Activated naive CD4-positive, alpha-beta T cell treated with anti-CD3 and anti-CD28 coated beads for 36 hours (primary cell): ENCODE measurements at regions of chr10 and their contacts with region 1.

Region 1: DNA sequence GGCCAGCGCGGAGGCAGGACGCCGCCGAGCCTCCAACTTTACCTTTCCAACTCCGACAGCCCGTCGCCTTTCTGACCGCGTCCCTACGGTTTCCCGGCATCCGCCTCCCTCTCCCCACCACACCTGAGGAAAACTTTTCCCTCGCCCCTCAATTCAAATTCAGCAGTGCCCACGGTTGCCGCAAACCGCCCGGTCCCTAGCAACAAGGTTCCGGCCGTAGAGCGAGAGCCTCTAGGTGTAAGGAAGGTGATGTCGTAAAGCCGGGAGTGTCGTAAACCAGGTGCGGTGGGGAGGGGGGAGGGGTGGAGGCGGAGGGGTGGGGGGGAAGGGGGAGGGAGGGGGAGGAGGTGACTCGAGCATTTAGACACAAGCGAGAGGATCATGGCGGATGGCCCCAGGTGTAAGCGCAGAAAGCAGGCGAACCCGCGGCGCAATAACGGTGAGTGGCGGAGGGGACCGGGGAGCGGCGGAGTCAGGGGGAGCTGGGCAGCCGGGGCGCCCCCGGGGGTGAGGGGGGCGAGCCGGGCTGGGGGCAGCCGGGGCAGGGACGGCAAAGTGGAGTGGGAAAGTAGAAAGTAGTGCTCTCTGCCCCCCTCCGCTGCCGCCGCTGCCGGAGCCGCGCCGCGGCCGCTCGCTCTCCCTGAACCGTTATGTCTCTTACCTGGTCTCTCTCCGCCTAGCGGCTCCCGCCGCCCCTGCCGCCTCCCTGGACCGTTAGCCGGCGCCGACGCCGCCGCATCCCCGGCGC is at the start of gene ZEB1:
- DNase-seq: peak; percentile 96
- H3K4me3 Mint-ChIP-seq: peak within 1 kb of the TSS; percentile 98
- H3K27ac Mint-ChIP-seq: peak within 1 kb of the TSS; percentile 99
- H3K4me1 Mint-ChIP-seq: peaks cover 33% of the 10 kb centered on the region
- H3K27me3 Mint-ChIP-seq: no peaks in the 10 kb centered on the region
- total RNA-seq, gene ZEB1: 24.8 to 29.1 TPM

Region 2: DNA sequence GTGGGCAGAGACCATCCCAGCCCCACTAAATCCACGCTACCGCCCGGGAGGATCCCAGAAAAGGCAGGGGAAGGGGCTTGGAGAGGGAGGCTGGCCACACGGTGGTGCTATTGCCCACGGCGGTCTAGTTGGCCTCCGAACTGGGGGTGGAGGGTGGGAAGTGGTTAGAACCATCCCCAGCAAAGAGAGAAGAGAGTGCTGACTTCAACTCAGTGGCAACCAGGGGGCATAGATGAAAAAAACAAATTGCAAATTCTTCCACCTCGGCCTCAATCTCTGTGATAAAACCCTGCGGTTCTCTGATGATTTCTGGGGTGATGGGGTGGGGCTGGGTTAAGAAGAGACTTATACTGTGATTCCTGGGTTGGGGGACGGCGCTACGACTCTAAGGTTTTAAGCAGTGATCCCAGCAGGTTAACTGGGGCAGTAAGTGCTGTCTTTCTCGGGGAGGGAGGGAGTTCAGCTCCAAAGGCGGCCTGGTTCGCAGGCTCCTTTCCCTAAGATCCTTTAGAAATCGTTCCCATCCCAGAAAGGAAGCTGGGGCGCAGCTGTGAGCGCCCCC is 535.0 kb before region 1 on chr10:
- CTCF ChIA-PET with region 1: no interaction called
- intact Hi-C with region 1: loop called (anchors 1 kb)
- DNase-seq: peak; percentile 89
- H3K4me3 Mint-ChIP-seq: peak overlapping the region; percentile 69
- H3K27ac Mint-ChIP-seq: peak overlapping the region; percentile 0
- H3K4me1 Mint-ChIP-seq: peaks cover 17% of the 10 kb centered on the region
- H3K27me3 Mint-ChIP-seq: no peaks in the 10 kb centered on the region

Region 3: GRCh38 chr10:31083765-31084184 is 235.3 kb before region 1 on chr10:
- CTCF ChIA-PET with region 1: interaction called, 3 read pairs
- intact Hi-C with region 1: loop called (anchors 1 kb)
- DNase-seq: peak; percentile 86
- H3K4me3 Mint-ChIP-seq: no peak overlapping the region
- H3K27ac Mint-ChIP-seq: peak overlapping the region; percentile 54
- H3K4me1 Mint-ChIP-seq: peaks cover 6% of the 10 kb centered on the region
- H3K27me3 Mint-ChIP-seq: no peaks in the 10 kb centered on the region

Region 4: GRCh38 chr10:31340343-31340742 is 21.3 kb after region 1 on chr10:
- CTCF ChIA-PET with region 1: interaction called, 3 read pairs
- intact Hi-C with region 1: loop called (anchors 1 kb)
- DNase-seq: peak; percentile 49
- H3K4me3 Mint-ChIP-seq: no peak overlapping the region
- H3K27ac Mint-ChIP-seq: no peak overlapping the region
- H3K4me1 Mint-ChIP-seq: peaks cover 31% of the 10 kb centered on the region
- H3K27me3 Mint-ChIP-seq: no peaks in the 10 kb centered on the region

Region 5: GRCh38 chr10:31426401-31426800 is 107.4 kb after region 1 on chr10:
- CTCF ChIA-PET with region 1: no interaction called
- intact Hi-C with region 1: loop called (anchors 2 kb)
- DNase-seq: no peak
- H3K4me3 Mint-ChIP-seq: no peak overlapping the region
- H3K27ac Mint-ChIP-seq: no peak overlapping the region
- H3K4me1 Mint-ChIP-seq: peaks cover 54% of the 10 kb centered on the region
- H3K27me3 Mint-ChIP-seq: no peaks in the 10 kb centered on the region

Region 6: DNA sequence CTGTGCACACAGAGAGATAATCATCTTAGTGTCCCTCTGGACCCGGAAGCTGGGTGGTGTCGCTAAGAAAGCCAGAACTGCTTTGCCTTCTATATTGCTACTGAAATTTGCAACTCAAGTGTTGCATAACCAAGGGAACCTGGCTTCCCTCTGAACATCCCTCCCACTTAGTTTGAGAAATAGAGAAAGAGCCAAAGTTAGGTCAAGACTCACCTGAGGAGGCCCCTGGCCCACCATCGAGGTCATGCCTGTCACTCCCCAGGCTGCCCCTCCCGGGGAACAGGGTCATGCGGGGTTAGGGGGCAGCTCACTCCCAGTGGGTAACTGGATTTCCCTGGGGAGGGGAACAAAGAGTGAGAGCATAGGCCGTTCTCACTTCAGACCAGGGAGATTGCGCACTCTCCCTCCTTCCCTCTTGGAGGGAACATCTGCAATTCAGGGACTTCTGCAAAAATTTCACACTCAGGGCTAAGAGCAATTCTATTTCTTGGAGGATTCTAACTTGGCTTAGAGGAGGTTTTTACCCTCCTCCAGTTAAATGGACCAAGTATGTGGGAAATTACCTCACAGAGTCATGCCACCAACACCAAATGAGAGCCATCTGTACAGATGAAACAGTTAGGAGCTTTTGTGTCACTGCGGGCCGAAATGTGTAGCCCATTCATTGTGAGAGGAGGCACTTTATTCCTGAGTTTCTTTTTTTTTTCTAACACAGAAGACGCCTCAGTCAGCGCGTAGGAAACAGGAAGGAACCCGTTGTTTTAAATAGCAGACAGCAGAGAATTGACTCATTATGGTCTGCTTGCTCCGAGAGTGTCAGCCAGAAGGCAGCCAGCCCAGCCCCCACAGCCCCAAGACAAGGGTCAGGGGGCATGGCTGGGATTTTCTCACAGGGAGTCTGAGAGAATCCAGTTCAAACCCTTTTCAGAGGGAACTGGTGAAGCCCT is 388.3 kb after region 1 on chr10:
- CTCF ChIA-PET with region 1: no interaction called
- intact Hi-C with region 1: loop called (anchors 1 kb)
- DNase-seq: peak; percentile 85
- H3K4me3 Mint-ChIP-seq: peak overlapping the region; percentile 5
- H3K27ac Mint-ChIP-seq: peak overlapping the region; percentile 83
- H3K4me1 Mint-ChIP-seq: peaks cover 22% of the 10 kb centered on the region
- H3K27me3 Mint-ChIP-seq: no peaks in the 10 kb centered on the region

Region 7: GRCh38 chr10:31739711-31740110 is 420.7 kb after region 1 on chr10:
- CTCF ChIA-PET with region 1: no interaction called
- intact Hi-C with region 1: no loop called
- DNase-seq: no peak
- H3K4me3 Mint-ChIP-seq: no peak overlapping the region
- H3K27ac Mint-ChIP-seq: no peak overlapping the region
- H3K4me1 Mint-ChIP-seq: peaks cover 22% of the 10 kb centered on the region
- H3K27me3 Mint-ChIP-seq: no peaks in the 10 kb centered on the region

Region 8: DNA sequence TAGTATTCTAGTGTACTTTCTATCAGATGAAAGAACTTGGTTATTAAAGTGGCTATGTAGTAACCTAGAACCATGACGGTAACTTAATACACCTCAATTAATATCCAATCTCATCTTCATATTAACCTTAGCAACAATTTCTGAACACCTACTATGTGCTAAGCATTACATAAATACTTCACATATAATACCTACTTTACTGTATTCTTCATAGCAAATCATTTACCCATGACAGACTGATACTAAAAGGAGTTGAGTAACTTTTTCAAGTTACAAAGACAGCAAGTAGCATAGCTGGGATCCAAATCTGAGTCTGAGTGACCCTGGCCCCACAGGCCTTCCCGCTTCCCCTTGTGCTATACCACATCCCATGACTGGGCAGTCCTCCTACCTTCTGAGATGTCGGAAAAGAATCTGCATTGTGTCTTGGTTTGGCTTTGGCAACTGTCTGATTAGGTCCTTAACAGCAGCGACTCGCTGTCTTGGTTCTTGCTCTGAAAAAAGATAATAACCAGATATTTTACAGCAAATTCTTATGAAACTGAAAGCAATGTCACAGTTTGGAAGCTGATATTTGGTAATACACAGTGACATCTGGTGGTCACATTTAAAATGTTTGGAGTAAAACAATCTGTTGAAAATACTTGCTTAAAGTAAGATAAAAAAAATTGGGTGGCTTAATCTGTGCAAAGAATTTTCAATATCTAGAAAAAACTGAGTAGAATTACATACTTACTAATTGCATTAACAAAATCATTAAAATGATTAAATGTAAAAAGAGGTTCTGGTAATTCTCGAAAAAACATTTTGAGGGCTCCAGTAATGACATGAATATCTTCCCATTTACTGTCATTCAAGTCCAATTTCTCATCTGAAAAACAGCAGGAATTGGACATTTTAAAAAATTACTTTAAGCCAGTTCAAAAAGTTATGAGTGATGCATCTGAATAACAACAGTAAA is 489.5 kb after region 1 on chr10:
- CTCF ChIA-PET with region 1: no interaction called
- intact Hi-C with region 1: loop called (anchors 2 kb)
- DNase-seq: peak; percentile 24
- H3K4me3 Mint-ChIP-seq: peak overlapping the region; percentile 57
- H3K27ac Mint-ChIP-seq: peak overlapping the region; percentile 77
- H3K4me1 Mint-ChIP-seq: peaks cover 6% of the 10 kb centered on the region
- H3K27me3 Mint-ChIP-seq: no peaks in the 10 kb centered on the region